ENCODE measurements at regions of chr12 and their contacts with region 1.

Region 1: GRCh38 chr12:13973996-13974395 is 7.4 kb downstream of the GRIN2B start:
- DNase-seq: no peak
- ATAC-seq: no peak

Region 2: DNA sequence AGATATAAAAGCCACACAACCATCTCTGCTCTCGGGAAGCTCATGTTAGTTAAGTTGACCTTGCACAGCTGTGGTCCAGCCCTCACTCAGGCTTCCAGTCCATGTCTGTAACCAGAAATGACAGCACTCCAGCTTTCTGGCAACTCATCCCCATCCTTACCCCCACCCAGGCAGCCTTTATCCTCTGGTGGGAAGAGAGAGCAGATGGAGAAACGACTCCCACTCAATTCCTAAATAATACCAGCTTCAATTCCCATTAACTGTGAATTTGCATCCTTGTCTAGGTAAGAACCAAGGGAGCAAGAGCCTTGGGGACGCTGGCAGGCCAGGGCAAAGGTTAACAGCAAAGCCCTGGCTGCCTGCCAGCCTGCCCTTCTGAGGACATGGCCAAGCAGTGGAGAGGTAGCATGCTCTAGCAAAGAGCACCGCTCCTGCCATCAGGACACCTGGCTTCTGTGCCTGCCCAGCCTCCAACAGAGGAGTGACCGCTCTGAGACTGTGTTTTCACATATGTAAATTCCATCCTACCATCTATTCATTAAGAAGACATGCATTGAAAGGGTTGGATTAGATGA is 228.8 kb before region 1 on chr12:
- intact Hi-C with region 1: loop called (anchors 10 kb)
- DNase-seq: no peak
- ATAC-seq: no peak

Region 3: DNA sequence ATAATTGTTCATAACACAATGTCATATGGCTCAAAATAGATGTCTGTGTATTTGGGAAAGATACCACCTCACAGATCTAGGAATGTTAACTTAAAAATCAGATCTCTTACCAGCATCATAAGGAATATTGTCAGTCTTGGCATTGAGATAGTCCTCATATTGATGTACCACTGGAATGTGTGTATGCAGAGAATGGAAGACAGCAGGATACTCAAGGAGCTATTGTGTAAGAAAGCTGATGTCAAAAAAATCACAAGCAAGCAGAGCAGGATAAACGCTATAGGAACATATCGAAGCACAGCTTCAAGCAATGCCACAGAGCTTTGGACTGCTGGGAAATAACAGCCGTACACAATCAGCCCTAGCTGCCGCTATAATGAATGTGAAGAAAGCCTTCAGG is 52.5 kb after region 1 on chr12:
- intact Hi-C with region 1: loop called (anchors 1 kb)
- DNase-seq: no peak
- ATAC-seq: no peak

Region 4: DNA sequence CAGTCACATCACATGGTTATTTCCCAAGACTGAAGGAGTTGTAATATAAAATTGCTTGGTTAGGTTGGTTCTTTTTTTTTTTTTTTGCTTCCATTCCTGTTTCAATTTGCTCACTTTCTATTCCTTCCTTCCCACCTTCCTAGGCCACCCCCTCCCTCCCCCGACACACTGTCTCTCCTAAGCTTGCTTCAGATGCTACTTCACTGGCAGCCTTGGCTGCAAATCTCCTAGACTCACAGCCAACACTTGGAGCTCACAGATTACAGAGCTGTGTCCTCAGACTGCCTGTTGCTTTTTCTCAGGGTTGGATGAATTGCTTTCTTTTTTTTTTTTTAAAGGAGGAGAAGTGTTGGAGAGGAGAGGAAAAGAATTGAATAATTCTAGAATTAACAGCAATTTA is 84.7 kb after region 1 on chr12:
- intact Hi-C with region 1: no loop called
- DNase-seq: no peak
- ATAC-seq: no peak